Ovary (tissue), 10 donors: ENCODE measurements at regions of chr17 and their contacts with region 1.

Region 1: DNA sequence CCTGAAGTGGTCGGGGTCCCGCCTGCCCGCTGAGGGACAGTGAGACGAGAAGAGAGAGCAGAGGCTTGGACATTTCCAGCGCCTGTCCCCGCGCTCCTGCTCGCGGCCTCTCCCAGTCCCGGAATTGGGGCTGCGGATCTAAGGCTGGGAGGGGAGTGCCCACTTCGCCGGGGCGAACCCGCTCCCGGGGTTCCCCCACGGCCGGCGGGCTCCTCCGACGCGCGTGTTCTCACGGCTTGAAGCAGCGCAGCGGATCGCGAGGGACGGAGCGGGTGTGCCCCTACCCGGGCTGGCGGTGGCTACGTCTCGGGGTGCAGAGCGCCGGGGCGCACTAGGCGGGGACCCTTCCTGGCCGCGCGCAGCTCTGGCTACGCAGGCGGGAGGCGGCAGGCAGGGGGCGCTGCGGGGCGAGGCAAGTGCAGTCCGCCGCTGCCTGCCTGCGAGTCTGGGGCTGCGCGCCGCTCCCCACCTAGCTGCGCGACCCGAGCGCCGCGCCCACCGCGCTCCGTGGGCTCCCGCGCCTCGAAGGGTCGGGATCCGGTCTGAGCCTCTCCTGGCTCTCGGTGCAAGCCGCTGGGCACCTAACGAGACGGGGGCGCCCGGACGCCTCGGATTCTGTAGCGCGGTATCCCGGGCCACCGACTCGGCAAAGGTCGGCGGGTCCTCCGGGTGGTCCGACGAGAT is 1.2 kb downstream of the NGFR start:
- DNase-seq: peak; percentile 72 to 87 (median 79)
- H3K4me3 ChIP-seq: peak overlapping the region; percentile 35
- H3K27ac ChIP-seq: no peak overlapping the region
- H3K4me1 ChIP-seq: peaks cover 20% of the 10 kb centered on the region
- H3K27me3 ChIP-seq: peaks cover 10% of the 10 kb centered on the region
- CTCF ChIP-seq: peak; percentile 82 to 91 (median 89)
- EP300 ChIP-seq: no peak
- POLR2A ChIP-seq: no peak

Region 2: GRCh38 chr17:49407981-49408501 is 88.3 kb before region 1 on chr17:
- intact Hi-C with region 1: loop called in 1 of 4 experiments (anchors 10 kb)
- DNase-seq: peak; percentile 50 to 76 (median 60)
- H3K4me3 ChIP-seq: no peak overlapping the region
- H3K27ac ChIP-seq: no peak overlapping the region
- H3K4me1 ChIP-seq: no peaks in the 10 kb centered on the region
- H3K27me3 ChIP-seq: no peaks in the 10 kb centered on the region
- CTCF ChIP-seq: peak in 2 of 3 donors; percentile 17 to 40
- EP300 ChIP-seq: no peak
- POLR2A ChIP-seq: no peak

Region 3: DNA sequence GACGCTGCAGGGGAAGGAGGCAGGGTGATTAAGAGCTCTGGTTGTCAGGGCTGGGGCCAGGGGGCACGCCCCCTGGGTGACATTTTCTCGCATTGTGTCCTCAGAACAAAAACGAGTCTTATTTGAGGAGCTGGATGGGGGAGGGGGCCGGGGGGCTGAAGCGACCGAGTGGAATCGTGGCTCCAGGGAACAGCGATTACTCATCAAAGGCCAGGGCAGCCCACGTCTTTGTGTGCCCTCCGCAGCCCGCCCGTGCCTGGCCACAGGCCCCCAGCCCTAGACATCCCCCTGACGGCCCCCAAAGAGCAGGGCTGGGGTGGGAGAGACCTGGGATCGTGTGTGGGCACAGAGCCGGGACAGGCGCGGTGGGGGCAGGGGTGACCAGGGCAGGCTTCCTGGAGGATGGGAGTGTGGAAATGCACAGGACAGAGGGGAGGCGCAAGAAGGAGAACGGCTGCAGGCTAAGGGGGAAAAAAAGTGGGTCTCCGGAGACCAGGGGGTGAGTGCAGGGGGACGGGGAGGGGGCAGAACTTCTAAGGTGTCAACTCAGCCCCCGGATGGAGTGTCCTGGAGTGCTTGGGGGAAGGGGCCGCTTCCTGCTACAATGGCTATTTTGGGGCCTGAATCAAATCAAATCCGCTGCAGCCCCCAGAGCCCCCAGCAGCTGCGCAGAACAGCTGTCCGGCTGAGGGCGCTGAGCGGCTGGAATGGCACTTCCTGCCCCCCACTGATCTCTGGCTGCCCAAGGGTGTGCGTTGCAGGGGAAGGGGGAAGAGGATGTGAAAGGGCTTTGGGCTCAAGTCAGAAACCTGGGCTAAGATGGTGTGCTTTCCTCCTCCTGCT is 57.7 kb before region 1 on chr17:
- intact Hi-C with region 1: no loop called
- DNase-seq: no peak
- H3K4me3 ChIP-seq: no peak overlapping the region
- H3K27ac ChIP-seq: no peak overlapping the region
- H3K4me1 ChIP-seq: no peaks in the 10 kb centered on the region
- H3K27me3 ChIP-seq: no peaks in the 10 kb centered on the region
- CTCF ChIP-seq: no peak
- EP300 ChIP-seq: no peak
- POLR2A ChIP-seq: no peak

Region 4: DNA sequence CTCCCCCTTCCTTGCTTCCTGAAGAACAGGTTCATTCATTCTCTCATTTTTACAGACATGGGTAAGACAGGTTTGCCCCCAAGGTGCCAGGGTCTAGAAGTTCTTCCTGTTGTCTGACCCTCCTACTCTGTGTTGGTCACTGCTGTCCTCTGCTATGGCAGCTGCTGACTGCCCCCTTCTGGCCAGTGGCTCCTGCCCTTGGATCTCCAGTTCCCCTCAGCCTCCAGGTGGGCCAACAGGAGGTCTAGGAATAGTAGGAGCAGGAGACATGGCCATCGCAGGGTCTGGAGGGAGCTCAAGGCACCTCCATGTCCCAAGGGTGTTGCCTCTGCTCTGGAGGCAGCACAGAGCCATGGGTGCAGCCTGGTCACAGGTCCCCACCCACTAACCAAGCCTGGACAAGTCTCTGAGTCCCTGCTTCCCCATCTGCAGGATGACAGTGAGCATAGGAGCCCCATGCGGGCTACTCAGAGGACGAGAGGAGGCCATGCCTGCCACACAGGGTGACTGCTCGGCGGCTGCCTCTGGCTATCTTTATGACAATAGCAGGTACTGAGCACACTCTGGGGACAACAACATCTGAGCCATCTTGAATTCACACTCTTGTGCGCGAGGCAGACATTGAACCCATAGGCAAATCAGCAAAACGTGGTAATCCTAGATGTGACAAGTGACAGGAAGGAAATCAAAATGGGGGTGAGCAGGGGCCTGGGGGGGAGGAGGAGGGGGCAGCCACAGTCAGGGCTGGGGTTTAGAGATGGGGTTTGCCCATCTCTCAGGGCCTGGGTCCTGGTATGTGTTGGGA is 52.4 kb after region 1 on chr17:
- intact Hi-C with region 1: no loop called
- DNase-seq: no peak
- H3K4me3 ChIP-seq: no peak overlapping the region
- H3K27ac ChIP-seq: no peak overlapping the region
- H3K4me1 ChIP-seq: no peaks in the 10 kb centered on the region
- H3K27me3 ChIP-seq: no peaks in the 10 kb centered on the region
- CTCF ChIP-seq: no peak
- EP300 ChIP-seq: no peak
- POLR2A ChIP-seq: no peak

Region 5: DNA sequence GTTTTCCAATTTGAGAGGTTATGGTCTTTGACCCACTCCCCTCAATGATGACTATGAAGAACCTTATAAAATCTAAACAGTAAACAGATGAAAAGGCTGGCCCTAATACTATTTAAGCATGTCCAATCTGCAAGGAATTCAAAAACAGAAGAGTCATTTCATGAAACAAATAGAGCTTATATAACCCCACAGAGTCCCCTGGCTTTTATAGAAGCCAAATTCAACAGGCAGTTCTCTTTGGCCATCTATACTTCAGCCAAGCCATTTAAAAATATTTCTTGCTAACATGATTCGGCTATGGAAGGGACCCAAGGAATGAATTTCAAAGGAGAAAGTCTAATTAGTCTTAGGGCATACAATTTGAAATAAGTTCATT is 138.1 kb after region 1 on chr17:
- intact Hi-C with region 1: no loop called
- DNase-seq: no peak
- H3K4me3 ChIP-seq: no peak overlapping the region
- H3K27ac ChIP-seq: peak overlapping the region in 1 of 2 donors; percentile 40
- H3K4me1 ChIP-seq: peaks cover 10% of the 10 kb centered on the region
- H3K27me3 ChIP-seq: no peaks in the 10 kb centered on the region
- CTCF ChIP-seq: no peak
- EP300 ChIP-seq: no peak
- POLR2A ChIP-seq: no peak